OCI-LY7 (cell line): ENCODE measurements at regions of chr22 and their contacts with region 1.

Region 1: GRCh38 chr22:35150183-35151107 is 84.5 kb downstream of the ISX start:
- DNase-seq: peak; percentile 67
- H3K4me3 ChIP-seq: no peak overlapping the region
- H3K27ac ChIP-seq: no peak overlapping the region
- H3K4me1 ChIP-seq: no peaks in the 10 kb centered on the region
- CTCF ChIP-seq: peak; percentile 91

Region 2: GRCh38 chr22:34847072-34847471 is 303.4 kb before region 1 on chr22:
- CTCF ChIA-PET with region 1: no interaction called
- POLR2A ChIA-PET with region 1: no interaction called
- intact Hi-C with region 1: no loop called
- DNase-seq: no peak
- H3K4me3 ChIP-seq: no peak overlapping the region
- H3K27ac ChIP-seq: no peak overlapping the region
- H3K4me1 ChIP-seq: no peaks in the 10 kb centered on the region
- CTCF ChIP-seq: no peak

Region 3: GRCh38 chr22:34986523-34986922 is 163.9 kb before region 1 on chr22:
- CTCF ChIA-PET with region 1: no interaction called
- POLR2A ChIA-PET with region 1: no interaction called
- intact Hi-C with region 1: no loop called
- DNase-seq: no peak
- H3K4me3 ChIP-seq: no peak overlapping the region
- H3K27ac ChIP-seq: no peak overlapping the region
- H3K4me1 ChIP-seq: no peaks in the 10 kb centered on the region
- CTCF ChIP-seq: no peak

Region 4: GRCh38 chr22:35021161-35021560 is 129.3 kb before region 1 on chr22:
- CTCF ChIA-PET with region 1: no interaction called
- POLR2A ChIA-PET with region 1: no interaction called
- intact Hi-C with region 1: no loop called
- DNase-seq: no peak
- H3K4me3 ChIP-seq: no peak overlapping the region
- H3K27ac ChIP-seq: no peak overlapping the region
- H3K4me1 ChIP-seq: no peaks in the 10 kb centered on the region
- CTCF ChIP-seq: no peak

Region 5: GRCh38 chr22:35033635-35034296 is 116.7 kb before region 1 on chr22:
- CTCF ChIA-PET with region 1: no interaction called
- POLR2A ChIA-PET with region 1: no interaction called
- intact Hi-C with region 1: no loop called
- DNase-seq: no peak
- H3K4me3 ChIP-seq: no peak overlapping the region
- H3K27ac ChIP-seq: no peak overlapping the region
- H3K4me1 ChIP-seq: no peaks in the 10 kb centered on the region
- CTCF ChIP-seq: no peak

Region 6: GRCh38 chr22:35231585-35232084 is 81.2 kb after region 1 on chr22:
- CTCF ChIA-PET with region 1: no interaction called
- POLR2A ChIA-PET with region 1: no interaction called
- intact Hi-C with region 1: loop called (anchors 1 kb)
- DNase-seq: peak; percentile 83
- H3K4me3 ChIP-seq: no peak overlapping the region
- H3K27ac ChIP-seq: no peak overlapping the region
- H3K4me1 ChIP-seq: peaks cover 3% of the 10 kb centered on the region
- CTCF ChIP-seq: peak; percentile 99